AG04450 (cell line): ENCODE measurements at regions of chr1 and their contacts with region 1.

Region 1: GRCh38 chr1:228305721-228306152 is 97.9 kb downstream of the OBSCN start:
- DNase-seq: no peak
- H3K4me3 ChIP-seq: no peak overlapping the region
- H3K27ac ChIP-seq: no peak overlapping the region
- H3K27me3 ChIP-seq: no peaks in the 10 kb centered on the region
- CTCF ChIP-seq: no peak

Region 2: GRCh38 chr1:228197555-228198147 is 108.1 kb before region 1 on chr1:
- CTCF ChIA-PET with region 1: no interaction called
- POLR2A ChIA-PET with region 1: interaction called, 11 read pairs
- DNase-seq: no peak
- H3K4me3 ChIP-seq: no peak overlapping the region
- H3K27ac ChIP-seq: no peak overlapping the region
- H3K27me3 ChIP-seq: no peaks in the 10 kb centered on the region
- CTCF ChIP-seq: no peak